ENCODE measurements at regions of chr16 and their contacts with region 1.

Region 1: DNA sequence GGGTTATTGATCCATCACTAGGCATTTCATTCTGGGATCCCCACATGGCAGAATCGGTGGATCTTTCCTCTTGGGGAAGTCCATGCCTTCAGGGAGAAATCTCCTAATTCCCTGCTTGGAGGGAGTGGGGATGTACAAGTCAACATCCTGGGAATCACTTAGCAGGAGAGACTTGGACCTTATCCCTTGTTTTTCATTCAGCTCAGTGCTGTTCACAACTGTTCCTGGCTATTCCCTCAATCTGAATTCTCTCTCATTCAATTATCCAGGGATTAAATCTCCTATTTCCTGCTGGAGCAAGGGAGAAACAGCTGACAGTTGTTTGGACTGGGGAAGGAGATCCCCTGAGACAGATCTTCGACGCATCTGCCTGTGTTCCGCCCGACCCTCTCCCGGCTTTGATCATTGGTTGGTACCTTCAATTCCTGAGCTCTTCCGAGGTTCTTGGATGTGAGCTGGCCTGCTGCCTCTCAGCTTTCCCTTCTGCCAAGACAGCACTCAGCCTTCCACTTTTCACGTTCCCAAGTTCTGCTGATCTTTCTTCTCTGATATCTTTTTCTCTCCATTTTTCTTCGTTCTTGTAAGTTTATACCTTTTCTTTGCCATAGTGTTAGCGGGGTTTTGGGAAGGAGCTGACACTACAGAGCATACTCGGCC is 115.4 kb upstream of the GNAO1 start:
- DNase-seq: no peak
- H3K4me3 Mint-ChIP-seq: no peak overlapping the region
- H3K27ac Mint-ChIP-seq: no peak overlapping the region
- H3K4me1 Mint-ChIP-seq: no peaks in the 10 kb centered on the region
- H3K27me3 Mint-ChIP-seq: peaks cover 47% of the 10 kb centered on the region
- CTCF ChIP-seq: no peak

Region 2: GRCh38 chr16:55832758-55833540 is 242.9 kb before region 1 on chr16 and contains the start of gene CES1:
- CTCF ChIA-PET with region 1: interaction called, 14 read pairs
- intact Hi-C with region 1: no loop called
- DNase-seq: no peak
- H3K4me3 Mint-ChIP-seq: no peak within 1 kb of the TSS
- H3K27ac Mint-ChIP-seq: no peak within 1 kb of the TSS
- H3K4me1 Mint-ChIP-seq: no peaks in the 10 kb centered on the region
- H3K27me3 Mint-ChIP-seq: peaks cover 75% of the 10 kb centered on the region
- CTCF ChIP-seq: no peak
- total RNA-seq, gene CES1: 0.78 and 0.86 TPM in 2 replicates